ENCODE measurements at regions of chr16 and their contacts with region 1.

Region 1: GRCh38 chr16:30407102-30407803 is at the start of gene ZNF771:
- DNase-seq: peak; percentile 80 to 83 (median 81)
- H3K4me3 ChIP-seq: peak within 1 kb of the TSS; percentile 51 to 74 (median 58)
- H3K4me3 Mint-ChIP-seq: peak within 1 kb of the TSS; percentile 86 to 95
- H3K27ac ChIP-seq: peak within 1 kb of the TSS in 1 of 2 donors; percentile 8
- H3K27ac Mint-ChIP-seq: peak within 1 kb of the TSS; percentile 42 to 84 (median 57)
- H3K4me1 ChIP-seq: peaks cover 24 to 40% of the 10 kb centered on the region in 2 donors
- H3K4me1 Mint-ChIP-seq: peaks cover 28% of the 10 kb centered on the region
- H3K27me3 ChIP-seq: no peaks in the 10 kb centered on the region
- H3K27me3 Mint-ChIP-seq: peaks cover 0 to 4% (median 3%) of the 10 kb centered on the region in 3 donors
- CTCF ChIP-seq: no peak
- polyA plus RNA-seq, gene ZNF771: 0.39 to 0.68 (median 0.51) TPM

Region 2: DNA sequence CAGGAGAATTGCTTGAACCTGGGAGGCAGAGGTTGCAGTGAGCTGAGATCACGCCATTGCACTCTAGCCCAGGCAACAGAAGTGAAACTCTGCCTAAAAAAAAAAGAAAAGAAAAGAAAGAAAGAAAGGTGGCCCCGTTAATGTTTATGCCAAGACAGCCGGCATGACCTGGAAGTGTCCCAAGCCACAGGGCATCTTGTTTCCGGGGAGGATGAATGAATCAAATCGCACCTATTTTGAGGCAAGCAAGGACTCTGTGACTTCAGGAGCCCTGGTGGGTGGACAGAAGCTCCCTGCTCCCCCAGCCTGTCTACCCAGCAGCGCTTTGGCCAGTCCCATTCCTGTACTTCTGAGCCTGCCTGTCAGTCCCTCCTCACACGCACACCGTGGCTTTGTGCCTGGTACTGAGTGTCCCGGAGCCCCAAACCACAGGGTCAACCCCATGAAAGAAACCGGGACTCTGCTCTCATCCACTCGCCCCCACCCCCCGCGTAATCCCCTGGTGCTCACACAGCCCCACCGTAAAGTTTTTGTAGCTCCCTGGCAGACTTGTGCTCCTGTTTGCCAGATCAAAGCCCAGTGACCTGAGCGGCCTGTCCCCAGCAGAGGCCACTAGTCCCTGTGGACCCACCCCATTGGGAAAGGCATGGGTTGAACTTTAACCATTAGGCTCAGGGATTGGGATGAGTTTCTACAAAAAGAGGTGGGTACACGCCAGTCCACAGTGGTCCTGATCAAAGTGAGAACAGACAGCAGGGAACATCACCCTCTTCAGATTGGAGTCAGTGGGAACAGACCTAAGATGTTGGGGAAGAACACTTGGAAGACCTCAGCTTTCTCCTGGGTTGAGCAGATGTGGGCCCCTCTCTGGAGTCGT is 71.4 kb before region 1 on chr16:
- intact Hi-C with region 1: loop called in 1 of 2 experiments (anchors 5 kb)
- DNase-seq: peak in 2 of 3 donors; percentile 9 to 20
- H3K4me3 ChIP-seq: peak overlapping the region; percentile 55 to 80 (median 77)
- H3K4me3 Mint-ChIP-seq: peak overlapping the region; percentile 85 to 93
- H3K27ac ChIP-seq: peak overlapping the region; percentile 67 to 68
- H3K27ac Mint-ChIP-seq: peak overlapping the region; percentile 81 to 92 (median 87)
- H3K4me1 ChIP-seq: peaks cover 11% of the 10 kb centered on the region in 2 donors
- H3K4me1 Mint-ChIP-seq: peaks cover 22% of the 10 kb centered on the region
- H3K27me3 ChIP-seq: no peaks in the 10 kb centered on the region
- H3K27me3 Mint-ChIP-seq: peaks cover 0 to 2% (median 1%) of the 10 kb centered on the region in 3 donors
- CTCF ChIP-seq: no peak

Region 3: DNA sequence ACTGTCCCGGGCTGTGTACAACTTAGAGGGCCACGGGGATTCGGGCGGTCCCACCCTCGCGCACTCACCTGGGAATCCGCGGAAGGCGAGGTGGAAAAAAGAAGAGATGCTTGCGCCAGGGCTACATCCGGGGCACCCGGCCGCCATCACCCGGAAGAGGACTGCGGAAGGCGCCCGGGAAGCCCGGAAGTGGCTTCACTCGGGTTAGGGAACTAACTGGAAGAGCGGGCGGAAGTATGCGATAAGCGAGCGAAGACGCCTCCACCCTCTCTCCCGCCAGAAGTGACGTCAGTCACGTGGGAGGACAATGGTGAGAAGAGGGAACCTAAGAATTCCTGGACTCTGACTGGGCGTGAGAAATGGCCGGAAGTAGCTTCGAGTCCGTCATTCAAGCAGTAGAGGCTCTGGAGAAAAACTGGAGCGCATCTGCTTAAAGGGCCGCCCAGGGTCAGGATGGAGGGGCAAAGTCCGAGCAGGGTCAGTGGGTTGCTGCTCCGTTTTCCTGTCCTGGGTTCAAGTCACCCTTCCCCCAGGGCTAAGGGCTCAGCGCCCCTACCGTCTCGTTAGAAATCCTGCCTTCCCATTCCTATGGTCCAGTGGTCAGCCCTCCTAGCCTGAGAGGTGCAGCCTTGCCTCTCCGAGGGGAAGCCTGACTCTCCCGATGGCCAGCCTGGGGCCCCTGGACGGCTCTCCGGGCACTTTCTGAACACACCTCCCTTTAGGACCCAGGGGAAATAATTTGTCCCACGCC is 51.9 kb before region 1 on chr16 and contains the start of gene CD2BP2:
- intact Hi-C with region 1: loop called in 1 of 2 experiments (anchors 10 kb)
- DNase-seq: peak; percentile 99 to 100 (median 100)
- H3K4me3 ChIP-seq: peak within 1 kb of the TSS; percentile 82 to 100 (median 96)
- H3K4me3 Mint-ChIP-seq: peak within 1 kb of the TSS; percentile 97 to 99
- H3K27ac ChIP-seq: peak within 1 kb of the TSS; percentile 94 to 99
- H3K27ac Mint-ChIP-seq: peak within 1 kb of the TSS; percentile 97 to 100 (median 99)
- H3K4me1 ChIP-seq: peaks cover 26 to 36% of the 10 kb centered on the region in 2 donors
- H3K4me1 Mint-ChIP-seq: peaks cover 34% of the 10 kb centered on the region
- H3K27me3 ChIP-seq: no peaks in the 10 kb centered on the region
- H3K27me3 Mint-ChIP-seq: peaks cover 0 to 1% (median 0%) of the 10 kb centered on the region in 3 donors
- CTCF ChIP-seq: no peak
- polyA plus RNA-seq, gene CD2BP2: 23.9 to 31.8 (median 31.0) TPM

Region 4: DNA sequence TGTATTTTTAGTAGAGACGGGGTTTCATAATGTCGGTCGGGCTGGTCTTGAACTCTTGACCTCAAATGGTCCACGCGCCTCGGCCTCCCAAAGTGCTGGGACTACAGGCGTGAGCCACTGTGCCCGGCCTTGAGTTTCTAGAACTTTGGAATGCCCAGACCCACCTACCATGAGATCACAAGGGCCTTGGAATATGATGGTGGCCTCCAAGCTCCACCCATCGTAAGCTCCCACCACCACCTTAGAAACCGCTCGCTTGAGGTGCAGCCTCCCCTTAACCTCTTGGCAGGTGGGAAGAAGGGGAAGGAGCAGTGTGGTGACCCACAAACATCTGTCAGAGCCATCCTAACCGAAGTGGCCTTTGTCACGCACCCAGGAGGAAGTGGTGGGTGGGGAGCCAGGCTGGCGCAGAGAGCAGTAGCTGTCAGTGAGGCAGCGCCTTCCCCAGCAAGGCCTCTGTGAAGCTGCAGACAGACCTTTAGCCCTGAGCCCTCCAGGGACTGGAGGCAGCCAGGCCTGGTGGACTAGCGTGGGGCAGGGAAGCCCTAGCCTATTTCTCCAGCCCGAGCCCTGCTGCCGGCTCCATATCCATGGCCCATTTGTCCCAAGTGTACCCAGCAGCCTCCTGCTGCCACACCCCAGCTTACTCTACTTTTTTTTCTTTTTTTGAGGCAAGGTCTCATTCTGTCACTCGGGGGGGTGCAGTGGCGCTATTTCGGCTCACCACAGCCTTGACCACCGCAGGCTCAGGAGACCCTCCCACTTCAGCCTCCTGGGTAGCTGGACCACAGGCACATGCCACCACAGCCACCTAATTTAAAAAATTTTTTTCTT is 51.5 kb after region 1 on chr16:
- intact Hi-C with region 1: no loop called
- DNase-seq: peak; percentile 83 to 93 (median 89)
- H3K4me3 ChIP-seq: peak overlapping the region in 1 of 3 experiments; percentile 37
- H3K4me3 Mint-ChIP-seq: peak overlapping the region in 1 of 2 donors; percentile 55
- H3K27ac ChIP-seq: peak overlapping the region; percentile 86 to 89
- H3K27ac Mint-ChIP-seq: peak overlapping the region; percentile 79 to 92 (median 85)
- H3K4me1 ChIP-seq: peaks cover 46% of the 10 kb centered on the region in 2 donors
- H3K4me1 Mint-ChIP-seq: peaks cover 48% of the 10 kb centered on the region
- H3K27me3 ChIP-seq: no peaks in the 10 kb centered on the region
- H3K27me3 Mint-ChIP-seq: peaks cover 0 to 3% (median 2%) of the 10 kb centered on the region in 3 donors
- CTCF ChIP-seq: no peak

Region 5: GRCh38 chr16:30535777-30536190 is 128.5 kb after region 1 on chr16:
- intact Hi-C with region 1: no loop called
- DNase-seq: peak; percentile 50 to 59 (median 55)
- H3K4me3 ChIP-seq: peak overlapping the region; percentile 71 to 91 (median 87)
- H3K4me3 Mint-ChIP-seq: peak overlapping the region; percentile 90 to 97
- H3K27ac ChIP-seq: peak overlapping the region; percentile 76 to 80
- H3K27ac Mint-ChIP-seq: peak overlapping the region; percentile 87 to 94 (median 91)
- H3K4me1 ChIP-seq: peaks cover 28 to 35% of the 10 kb centered on the region in 2 donors
- H3K4me1 Mint-ChIP-seq: peaks cover 34% of the 10 kb centered on the region
- H3K27me3 ChIP-seq: no peaks in the 10 kb centered on the region
- H3K27me3 Mint-ChIP-seq: peaks cover 0 to 6% (median 2%) of the 10 kb centered on the region in 3 donors
- CTCF ChIP-seq: peak; percentile 43

Region 6: GRCh38 chr16:30957456-30958174 is 550.4 kb after region 1 on chr16 and contains the start of gene SETD1A:
- intact Hi-C with region 1: no loop called
- DNase-seq: peak; percentile 93 to 97 (median 96)
- H3K4me3 ChIP-seq: peak within 1 kb of the TSS; percentile 66 to 95 (median 71)
- H3K4me3 Mint-ChIP-seq: peak within 1 kb of the TSS; percentile 90 to 95
- H3K27ac ChIP-seq: peak within 1 kb of the TSS; percentile 88 to 97
- H3K27ac Mint-ChIP-seq: peak within 1 kb of the TSS; percentile 96 to 99 (median 99)
- H3K4me1 ChIP-seq: peaks cover 13 to 21% of the 10 kb centered on the region in 2 donors
- H3K4me1 Mint-ChIP-seq: peaks cover 17% of the 10 kb centered on the region
- H3K27me3 ChIP-seq: no peaks in the 10 kb centered on the region
- H3K27me3 Mint-ChIP-seq: peaks cover 0 to 1% (median 0%) of the 10 kb centered on the region in 3 donors
- CTCF ChIP-seq: no peak
- polyA plus RNA-seq, gene SETD1A: 0.16 to 6.6 (median 1.3) TPM